Panc1 (cell line): ENCODE measurements at regions of chr4 and their contacts with region 1.

Region 1: GRCh38 chr4:127896528-127896927 is 15.8 kb downstream of the PLK4 start:
- DNase-seq: no peak
- ATAC-seq: no peak
- H3K4me3 ChIP-seq: no peak overlapping the region
- H3K27ac ChIP-seq: no peak overlapping the region
- H3K4me1 ChIP-seq: no peaks in the 10 kb centered on the region
- H3K27me3 ChIP-seq: no peaks in the 10 kb centered on the region
- CTCF ChIP-seq: no peak

Region 2: DNA sequence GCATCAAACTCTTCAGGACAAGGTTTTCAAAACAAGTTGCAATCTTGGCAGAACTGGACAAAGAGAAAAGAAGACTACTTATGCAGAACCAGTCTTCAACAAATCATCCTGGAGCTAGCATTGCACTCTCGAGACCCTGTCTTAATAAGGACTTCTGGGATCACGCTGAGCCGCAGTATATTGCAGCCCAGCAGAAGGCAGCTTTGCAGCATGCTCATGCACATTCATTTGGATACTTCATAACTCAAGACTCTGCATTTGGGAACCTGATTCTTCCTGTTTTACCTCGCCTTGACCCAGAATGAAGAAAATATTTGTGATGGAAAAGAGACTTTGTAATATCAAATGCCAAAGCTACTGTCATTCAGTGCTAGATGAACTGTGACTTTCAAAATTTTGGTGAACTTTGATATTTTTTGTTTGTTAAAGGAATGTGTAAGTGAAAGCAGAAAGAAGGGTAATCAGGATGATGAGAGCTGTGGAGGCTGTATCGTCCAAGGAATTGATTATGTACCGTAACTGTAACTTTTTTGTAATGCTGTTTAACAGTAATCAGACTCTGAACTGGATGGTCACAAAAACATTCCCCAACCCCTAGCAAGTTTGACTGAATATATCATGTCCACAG is 87.2 kb before region 1 on chr4:
- CTCF ChIA-PET with region 1: no interaction called
- POLR2A ChIA-PET with region 1: no interaction called
- in situ Hi-C with region 1: no loop called
- intact Hi-C with region 1: no loop called
- DNase-seq: no peak
- ATAC-seq: no peak
- H3K4me3 ChIP-seq: no peak overlapping the region
- H3K27ac ChIP-seq: no peak overlapping the region
- H3K4me1 ChIP-seq: no peaks in the 10 kb centered on the region
- H3K27me3 ChIP-seq: no peaks in the 10 kb centered on the region
- CTCF ChIP-seq: no peak

Region 3: GRCh38 chr4:128204901-128205300 is 308.4 kb after region 1 on chr4:
- CTCF ChIA-PET with region 1: no interaction called
- POLR2A ChIA-PET with region 1: interaction called, 11 read pairs
- in situ Hi-C with region 1: no loop called
- intact Hi-C with region 1: no loop called
- DNase-seq: no peak
- ATAC-seq: no peak
- H3K4me3 ChIP-seq: no peak overlapping the region
- H3K27ac ChIP-seq: no peak overlapping the region
- H3K4me1 ChIP-seq: no peaks in the 10 kb centered on the region
- H3K27me3 ChIP-seq: no peaks in the 10 kb centered on the region
- CTCF ChIP-seq: no peak